Activated B cell treated with CpG ODN at 0.5 μM for 24 hours (primary cell): ENCODE measurements at regions of chr6 and their contacts with region 1.

Region 1: DNA sequence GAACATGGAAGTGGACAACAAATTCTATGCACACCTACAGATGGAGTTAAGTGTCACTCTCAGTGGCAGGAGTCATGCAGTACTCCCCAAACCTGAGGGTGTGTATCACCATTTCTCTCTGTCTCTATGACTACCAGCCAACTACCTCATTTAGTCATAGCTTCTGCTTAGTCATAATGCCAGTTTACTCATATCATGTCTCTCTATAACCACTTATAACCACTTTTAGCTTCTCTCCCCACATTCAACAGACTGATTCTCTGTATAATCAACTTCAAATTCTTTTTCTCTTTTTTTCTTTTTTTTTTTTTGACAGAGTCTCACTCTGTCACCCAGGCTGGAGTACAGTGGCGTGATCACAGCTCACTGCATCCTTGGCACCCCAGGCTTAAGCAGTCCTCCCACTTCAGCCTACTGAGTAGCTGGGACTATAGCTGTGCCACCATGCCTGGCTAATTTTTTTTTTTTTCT is 13.8 kb upstream of the GTF3C6 start:
- DNase-seq: peak; percentile 21
- ATAC-seq: peak; percentile 94
- H3K4me3 Mint-ChIP-seq: no peak overlapping the region
- H3K27ac Mint-ChIP-seq: peak overlapping the region; percentile 82
- H3K4me1 Mint-ChIP-seq: peaks cover 6% of the 10 kb centered on the region
- H3K27me3 Mint-ChIP-seq: no peaks in the 10 kb centered on the region
- CTCF ChIP-seq: no peak

Region 2: GRCh38 chr6:110900028-110900598 is 44.6 kb before region 1 on chr6:
- CTCF ChIA-PET with region 1: interaction called, 3 read pairs
- POLR2A ChIA-PET with region 1: interaction called, 13 read pairs
- intact Hi-C with region 1: no loop called
- DNase-seq: no peak
- ATAC-seq: no peak
- H3K4me3 Mint-ChIP-seq: no peak overlapping the region
- H3K27ac Mint-ChIP-seq: no peak overlapping the region
- H3K4me1 Mint-ChIP-seq: no peaks in the 10 kb centered on the region
- H3K27me3 Mint-ChIP-seq: no peaks in the 10 kb centered on the region
- CTCF ChIP-seq: no peak

Region 3: GRCh38 chr6:110933912-110934311 is 10.8 kb before region 1 on chr6:
- CTCF ChIA-PET with region 1: no interaction called
- POLR2A ChIA-PET with region 1: no interaction called
- intact Hi-C with region 1: loop called (anchors 1 kb)
- DNase-seq: no peak
- ATAC-seq: no peak
- H3K4me3 Mint-ChIP-seq: no peak overlapping the region
- H3K27ac Mint-ChIP-seq: no peak overlapping the region
- H3K4me1 Mint-ChIP-seq: peaks cover 9% of the 10 kb centered on the region
- H3K27me3 Mint-ChIP-seq: no peaks in the 10 kb centered on the region
- CTCF ChIP-seq: no peak

Region 4: GRCh38 chr6:110958329-110959192 is 13.8 kb after region 1 on chr6 and contains the start of gene GTF3C6:
- CTCF ChIA-PET with region 1: interaction called, 5 read pairs
- POLR2A ChIA-PET with region 1: interaction called, 14 read pairs
- intact Hi-C with region 1: loop called (anchors 1 kb)
- DNase-seq: peak; percentile 87
- ATAC-seq: peak; percentile 98
- H3K4me3 Mint-ChIP-seq: peak within 1 kb of the TSS; percentile 97
- H3K27ac Mint-ChIP-seq: peak within 1 kb of the TSS; percentile 98
- H3K4me1 Mint-ChIP-seq: peaks cover 19% of the 10 kb centered on the region
- H3K27me3 Mint-ChIP-seq: no peaks in the 10 kb centered on the region
- CTCF ChIP-seq: no peak
- total RNA-seq, gene GTF3C6: 76.7 and 93.3 TPM in 2 replicates